Heart right ventricle (tissue), 16 donors: ENCODE measurements at regions of chr12 and their contacts with region 1.

Region 1: DNA sequence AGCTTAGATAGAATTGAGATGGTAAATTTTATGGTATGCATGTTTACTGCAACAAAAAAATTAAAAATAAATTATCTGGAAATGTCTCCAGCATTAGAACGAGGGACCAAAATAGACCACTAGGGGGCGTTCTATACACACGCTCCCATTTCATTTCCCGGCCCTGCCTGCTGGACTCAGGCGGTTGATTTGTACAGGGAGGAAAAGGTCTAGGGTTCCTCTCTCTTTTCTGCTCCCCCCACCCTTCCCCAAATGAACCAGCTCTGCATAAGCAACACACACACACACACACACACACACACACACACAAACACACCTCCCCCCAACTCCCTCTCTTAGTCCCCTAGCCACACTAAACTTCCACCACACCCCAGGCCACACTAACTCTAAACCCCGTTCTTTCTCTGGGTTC is 7.8 kb upstream of the DTX1 start:
- DNase-seq: peak in 1 of 2 donors; percentile 66
- ATAC-seq: peak; percentile 55 to 90 (median 79)
- H3K4me3 ChIP-seq: no peak overlapping the region
- H3K27ac ChIP-seq: no peak overlapping the region
- H3K4me1 ChIP-seq: no peaks in the 10 kb centered on the region
- H3K27me3 ChIP-seq: peaks cover 0 to 48% (median 14%) of the 10 kb centered on the region in 7 donors
- CTCF ChIP-seq: peak; percentile 77 to 86 (median 85)

Region 2: DNA sequence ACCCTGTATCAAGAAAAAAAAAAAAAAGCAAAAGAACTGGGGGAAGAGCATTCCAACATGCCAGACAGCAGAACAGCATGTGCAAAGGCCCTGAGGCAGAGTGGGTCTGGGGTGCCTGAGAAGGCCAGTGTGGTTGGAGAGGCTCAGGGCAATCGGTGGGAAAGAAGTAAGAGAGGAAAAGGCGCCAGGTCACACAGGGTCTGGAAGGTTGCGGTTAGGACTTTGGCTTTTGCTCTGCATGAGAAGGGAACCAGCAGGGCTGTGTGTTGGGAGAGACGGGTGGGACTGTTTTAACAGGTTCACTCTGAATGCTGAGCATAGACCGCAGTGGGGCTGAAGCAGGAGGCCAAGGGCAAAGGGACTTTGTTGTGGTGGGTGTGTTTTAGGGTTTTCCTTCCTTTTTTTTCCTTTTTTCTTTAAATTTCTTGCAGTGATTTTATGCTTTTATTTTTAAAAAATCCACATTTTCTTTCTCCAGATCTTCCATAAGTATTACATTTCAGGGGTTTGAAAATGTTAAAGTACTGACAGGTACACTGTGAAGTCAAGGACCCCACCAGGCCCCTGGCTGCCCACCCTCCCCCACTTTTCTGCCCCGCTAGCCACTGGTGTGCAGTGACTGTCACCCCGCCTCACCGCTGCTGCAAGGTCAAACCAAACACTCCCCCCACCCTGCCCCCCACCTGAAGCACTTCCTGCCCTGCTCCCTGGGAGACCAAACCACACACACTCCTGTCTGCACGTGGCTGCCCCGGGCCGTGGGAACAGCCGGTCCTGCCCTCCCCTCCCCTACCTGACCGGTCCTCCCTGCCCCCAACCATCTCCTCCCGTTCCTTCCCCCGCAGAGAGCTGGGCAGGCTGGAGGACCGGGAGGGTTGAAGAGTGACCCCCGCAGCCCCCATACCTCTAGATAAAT is 37.8 kb after region 1 on chr12:
- intact Hi-C with region 1: no loop called
- DNase-seq: no peak
- ATAC-seq: no peak
- H3K4me3 ChIP-seq: no peak overlapping the region
- H3K27ac ChIP-seq: no peak overlapping the region
- H3K4me1 ChIP-seq: peaks cover 0 to 4% (median 0%) of the 10 kb centered on the region in 9 donors
- H3K27me3 ChIP-seq: peaks cover 0 to 88% (median 39%) of the 10 kb centered on the region in 7 donors
- CTCF ChIP-seq: no peak

Region 3: GRCh38 chr12:113098446-113098896 is 49.7 kb after region 1 on chr12:
- intact Hi-C with region 1: loop called in 9 of 10 experiments (anchors 1 to 5 kb)
- DNase-seq: peak; percentile 74 to 79
- ATAC-seq: peak; percentile 57 to 88 (median 76)
- H3K4me3 ChIP-seq: no peak overlapping the region
- H3K27ac ChIP-seq: no peak overlapping the region
- H3K4me1 ChIP-seq: peaks cover 0 to 12% (median 8%) of the 10 kb centered on the region in 9 donors
- H3K27me3 ChIP-seq: peaks cover under 1 to 52% (median 23%) of the 10 kb centered on the region in 7 donors
- CTCF ChIP-seq: peak; percentile 66 to 83 (median 76)

Region 4: GRCh38 chr12:113152835-113153814 is 104.4 kb after region 1 on chr12:
- intact Hi-C with region 1: loop called (anchors 2 to 10 kb)
- DNase-seq: peak; percentile 45 to 72
- ATAC-seq: peak; percentile 77 to 86 (median 82)
- H3K4me3 ChIP-seq: peak overlapping the region; percentile 7 to 52 (median 40)
- H3K27ac ChIP-seq: no peak overlapping the region
- H3K4me1 ChIP-seq: peaks cover 3 to 30% (median 23%) of the 10 kb centered on the region in 9 donors
- H3K27me3 ChIP-seq: peaks cover 10 to 76% (median 69%) of the 10 kb centered on the region in 7 donors
- CTCF ChIP-seq: peak in 8 of 9 donors; percentile 3 to 67 (median 56)

Region 5: DNA sequence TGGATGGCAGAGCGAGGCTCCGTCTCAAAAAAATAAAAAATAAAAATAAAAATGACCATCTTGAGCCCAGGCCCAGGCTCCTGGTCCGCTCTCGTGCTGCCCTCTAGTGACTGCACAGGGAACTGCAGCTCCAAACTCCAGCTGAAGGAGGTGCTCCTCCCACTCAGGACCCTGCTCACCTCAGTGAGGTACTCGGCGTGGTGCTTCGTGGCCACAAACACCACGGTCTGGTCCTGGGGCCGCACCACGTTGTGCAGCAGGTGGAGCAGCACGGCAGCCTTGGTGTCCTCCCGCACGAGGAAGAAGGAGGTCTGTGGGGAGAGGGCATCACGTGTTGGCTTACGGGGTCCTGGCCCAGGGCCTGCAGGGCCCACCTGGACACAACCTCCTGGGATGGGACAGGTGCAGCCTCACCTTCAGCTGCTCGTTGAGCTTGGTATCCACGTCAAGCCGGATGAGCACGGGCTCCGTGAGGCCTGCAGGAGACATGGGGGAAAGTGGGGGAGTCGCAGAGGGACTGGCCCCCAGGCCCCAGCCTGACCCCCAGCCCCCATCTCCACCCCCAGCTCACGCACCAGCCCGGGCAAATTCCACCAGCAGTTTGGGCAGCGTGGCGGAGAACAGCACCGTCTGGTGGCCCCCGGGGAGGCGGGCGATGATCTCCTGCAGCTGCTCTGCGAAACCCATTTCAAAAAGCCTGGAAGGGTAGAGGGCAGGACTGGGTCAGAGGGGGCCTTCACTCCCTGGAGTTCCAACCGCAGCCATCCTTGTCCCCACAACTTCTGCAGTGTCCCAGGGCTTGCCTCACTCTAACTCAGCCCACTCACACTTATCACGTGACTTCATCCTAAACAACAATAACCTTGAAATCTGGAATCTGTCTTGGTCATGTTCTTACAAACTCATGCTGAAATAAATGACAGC is 126.0 kb after region 1 on chr12:
- intact Hi-C with region 1: loop called in 9 of 10 experiments (anchors 1 to 5 kb)
- DNase-seq: peak; percentile 70 to 79
- ATAC-seq: peak; percentile 41 to 85 (median 75)
- H3K4me3 ChIP-seq: no peak overlapping the region
- H3K27ac ChIP-seq: no peak overlapping the region
- H3K4me1 ChIP-seq: no peaks in the 10 kb centered on the region
- H3K27me3 ChIP-seq: no peaks in the 10 kb centered on the region
- CTCF ChIP-seq: peak; percentile 94 to 99 (median 99)